AG04450 (cell line): ENCODE measurements at regions of chr14 and their contacts with region 1.

Region 1: GRCh38 chr14:23379366-23380196 is 2.7 kb downstream of the CMTM5 start:
- DNase-seq: no peak
- H3K4me3 ChIP-seq: no peak overlapping the region
- H3K27ac ChIP-seq: no peak overlapping the region
- H3K27me3 ChIP-seq: peaks cover 46% of the 10 kb centered on the region
- CTCF ChIP-seq: peak; percentile 97

Region 2: DNA sequence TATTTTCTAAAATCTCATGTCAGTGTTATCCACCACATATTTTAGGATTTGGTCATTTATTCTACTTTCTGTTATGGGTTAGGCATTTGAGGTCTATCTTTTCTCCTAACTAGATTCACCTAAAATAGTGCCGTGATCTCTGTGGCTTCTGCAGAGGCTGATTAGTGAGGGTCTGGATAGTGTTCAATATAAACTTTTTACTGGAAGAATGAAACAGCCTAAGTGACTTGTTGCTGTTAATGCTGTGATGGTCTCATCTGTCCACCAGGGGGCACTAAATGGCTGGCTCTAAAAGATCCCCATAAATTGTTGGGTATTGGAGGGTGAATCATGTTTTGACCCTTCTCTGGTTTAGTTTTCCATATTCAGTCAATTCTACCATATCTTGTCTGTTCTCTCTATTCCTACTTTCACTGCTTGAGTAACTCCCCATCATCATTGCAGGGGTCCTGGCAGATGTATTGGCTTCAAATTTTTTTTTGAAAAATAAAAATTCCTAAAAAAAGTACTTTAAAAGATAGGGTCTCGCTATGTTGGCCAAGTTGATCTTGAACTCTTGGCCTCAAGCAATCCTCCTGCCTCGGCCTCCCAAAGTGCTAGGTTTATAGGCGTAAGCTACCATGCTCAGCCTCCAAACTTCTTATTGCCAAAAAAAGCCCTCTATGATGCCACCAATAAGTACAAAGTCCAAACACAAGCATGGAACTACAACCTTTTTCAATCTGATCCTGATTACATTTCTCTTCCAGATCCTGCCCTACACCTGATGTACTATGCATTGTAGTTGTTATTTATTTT is 51.4 kb before region 1 on chr14:
- CTCF ChIA-PET with region 1: interaction called, 138 read pairs
- POLR2A ChIA-PET with region 1: interaction called, 9 read pairs
- DNase-seq: peak; percentile 63
- H3K4me3 ChIP-seq: no peak overlapping the region
- H3K27ac ChIP-seq: no peak overlapping the region
- H3K27me3 ChIP-seq: no peaks in the 10 kb centered on the region
- CTCF ChIP-seq: peak; percentile 83

Region 3: GRCh38 chr14:23345987-23346692 is 33.4 kb before region 1 on chr14:
- CTCF ChIA-PET with region 1: interaction called, 11 read pairs
- POLR2A ChIA-PET with region 1: no interaction called
- DNase-seq: no peak
- H3K4me3 ChIP-seq: no peak overlapping the region
- H3K27ac ChIP-seq: no peak overlapping the region
- H3K27me3 ChIP-seq: peaks cover 3% of the 10 kb centered on the region
- CTCF ChIP-seq: no peak

Region 4: DNA sequence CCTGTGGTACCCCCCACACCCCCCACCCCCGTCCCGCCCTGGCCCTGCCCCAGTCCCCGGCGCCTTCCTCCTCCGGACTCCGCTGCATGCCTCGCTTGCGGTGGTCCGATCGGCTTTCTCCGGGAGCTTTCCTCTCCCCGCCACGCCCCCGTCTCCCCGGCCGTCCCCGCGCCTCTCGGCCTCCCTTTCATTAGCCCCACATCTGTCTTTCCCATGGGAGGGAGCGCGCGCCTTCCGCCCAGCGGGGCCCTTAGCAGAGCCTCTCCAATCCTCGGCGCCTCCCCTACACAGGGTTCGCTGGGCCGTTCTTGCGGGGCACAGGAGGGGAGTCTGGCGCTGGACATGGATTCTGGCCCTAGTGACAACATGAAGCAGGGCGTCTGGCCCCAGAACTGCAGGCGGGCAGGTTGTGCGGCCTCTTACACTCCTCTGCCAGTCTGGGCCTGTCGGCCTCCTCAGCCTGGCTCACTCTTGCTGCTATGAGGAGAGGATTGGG is 13.1 kb before region 1 on chr14:
- CTCF ChIA-PET with region 1: interaction called, 48 read pairs
- POLR2A ChIA-PET with region 1: no interaction called
- DNase-seq: peak; percentile 24
- H3K4me3 ChIP-seq: peak overlapping the region; percentile 69
- H3K27ac ChIP-seq: peak overlapping the region; percentile 68
- H3K27me3 ChIP-seq: peaks cover 16% of the 10 kb centered on the region
- CTCF ChIP-seq: no peak

Region 5: GRCh38 chr14:23402296-23403138 is 22.9 kb after region 1 on chr14:
- CTCF ChIA-PET with region 1: no interaction called
- POLR2A ChIA-PET with region 1: no interaction called
- DNase-seq: no peak
- H3K4me3 ChIP-seq: no peak overlapping the region
- H3K27ac ChIP-seq: no peak overlapping the region
- H3K27me3 ChIP-seq: peaks cover 5% of the 10 kb centered on the region
- CTCF ChIP-seq: no peak